B cell (primary cell): ENCODE measurements at regions of chr17 and their contacts with region 1.

Region 1: GRCh38 chr17:2786176-2786881 is 9.9 kb upstream of the RAP1GAP2 start:
- DNase-seq: peak; percentile 95
- ATAC-seq: peak; percentile 99
- H3K4me3 ChIP-seq: no peak overlapping the region
- H3K4me3 Mint-ChIP-seq: peak overlapping the region; percentile 44
- H3K27ac ChIP-seq: no peak overlapping the region
- H3K27ac Mint-ChIP-seq: peak overlapping the region; percentile 41
- H3K4me1 ChIP-seq: peaks cover 18 to 29% of the 10 kb centered on the region in 2 donors
- H3K4me1 Mint-ChIP-seq: peaks cover 19% of the 10 kb centered on the region
- H3K27me3 ChIP-seq: peaks cover 0 to 15% (median 4%) of the 10 kb centered on the region in 4 experiments
- H3K27me3 Mint-ChIP-seq: no peaks in the 10 kb centered on the region
- CTCF ChIP-seq: peak; percentile 89

Region 2: DNA sequence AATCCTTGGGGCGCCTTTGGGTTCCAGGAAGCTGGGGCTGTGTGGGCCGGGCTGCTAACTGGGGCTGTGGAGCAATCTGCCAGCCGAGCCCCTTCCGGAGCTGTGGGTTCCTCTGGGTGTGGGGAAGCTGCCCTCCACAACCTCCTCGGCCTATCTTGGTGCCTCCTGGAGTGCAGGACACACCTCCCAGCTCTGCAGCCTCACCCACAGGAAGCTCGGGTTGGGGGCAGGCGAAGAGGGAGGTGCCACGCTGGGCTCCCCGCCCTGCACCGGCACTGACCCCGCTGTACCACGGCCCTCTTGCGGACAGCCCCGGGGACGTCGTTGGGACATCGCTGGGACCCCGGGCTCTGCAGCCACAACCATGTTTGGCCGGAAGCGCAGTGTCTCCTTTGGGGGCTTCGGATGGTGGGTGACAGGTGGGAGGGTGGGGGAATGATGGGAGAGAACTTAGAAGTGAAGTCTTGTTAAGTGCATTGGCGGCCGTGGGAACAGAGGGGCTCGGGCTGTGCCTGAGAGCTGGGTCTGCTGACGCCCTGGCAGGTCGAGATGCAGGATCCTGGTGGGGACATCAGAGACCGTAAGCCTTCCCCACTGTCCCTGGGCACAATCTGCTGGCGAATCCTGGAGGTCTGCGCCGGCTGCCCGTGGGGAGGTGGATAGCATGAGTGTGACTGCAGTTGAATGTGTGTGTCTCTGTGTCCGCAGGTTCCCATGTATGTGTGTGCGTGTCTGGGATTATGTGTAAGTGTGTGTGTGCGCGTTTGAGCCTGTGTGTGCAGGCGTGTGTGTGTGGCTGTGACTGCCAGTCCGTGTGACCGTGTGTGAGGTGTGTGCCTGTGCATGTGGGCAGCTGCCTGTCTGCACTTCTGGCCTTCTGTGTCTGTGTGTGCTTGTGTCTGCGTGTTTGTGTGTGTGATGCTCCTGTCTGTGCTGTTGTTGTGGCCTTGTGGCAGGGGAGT is 10.1 kb after region 1 on chr17 and contains the start of gene RAP1GAP2:
- CTCF ChIA-PET with region 1: interaction called, 13 read pairs
- POLR2A ChIA-PET with region 1: interaction called, 3 read pairs
- intact Hi-C with region 1: loop called (anchors 1 kb)
- DNase-seq: peak; percentile 65
- ATAC-seq: peak; percentile 78
- H3K4me3 ChIP-seq: peak within 1 kb of the TSS; percentile 43 to 78 (median 62)
- H3K4me3 Mint-ChIP-seq: peak within 1 kb of the TSS; percentile 96
- H3K27ac ChIP-seq: peak within 1 kb of the TSS; percentile 7 to 33
- H3K27ac Mint-ChIP-seq: peak within 1 kb of the TSS; percentile 91
- H3K4me1 ChIP-seq: peaks cover 56 to 75% of the 10 kb centered on the region in 2 donors
- H3K4me1 Mint-ChIP-seq: peaks cover 71% of the 10 kb centered on the region
- H3K27me3 ChIP-seq: no peaks in the 10 kb centered on the region
- H3K27me3 Mint-ChIP-seq: no peaks in the 10 kb centered on the region
- CTCF ChIP-seq: no peak
- total RNA-seq, gene RAP1GAP2: 13.4 and 14.9 TPM in 2 replicates

Region 3: DNA sequence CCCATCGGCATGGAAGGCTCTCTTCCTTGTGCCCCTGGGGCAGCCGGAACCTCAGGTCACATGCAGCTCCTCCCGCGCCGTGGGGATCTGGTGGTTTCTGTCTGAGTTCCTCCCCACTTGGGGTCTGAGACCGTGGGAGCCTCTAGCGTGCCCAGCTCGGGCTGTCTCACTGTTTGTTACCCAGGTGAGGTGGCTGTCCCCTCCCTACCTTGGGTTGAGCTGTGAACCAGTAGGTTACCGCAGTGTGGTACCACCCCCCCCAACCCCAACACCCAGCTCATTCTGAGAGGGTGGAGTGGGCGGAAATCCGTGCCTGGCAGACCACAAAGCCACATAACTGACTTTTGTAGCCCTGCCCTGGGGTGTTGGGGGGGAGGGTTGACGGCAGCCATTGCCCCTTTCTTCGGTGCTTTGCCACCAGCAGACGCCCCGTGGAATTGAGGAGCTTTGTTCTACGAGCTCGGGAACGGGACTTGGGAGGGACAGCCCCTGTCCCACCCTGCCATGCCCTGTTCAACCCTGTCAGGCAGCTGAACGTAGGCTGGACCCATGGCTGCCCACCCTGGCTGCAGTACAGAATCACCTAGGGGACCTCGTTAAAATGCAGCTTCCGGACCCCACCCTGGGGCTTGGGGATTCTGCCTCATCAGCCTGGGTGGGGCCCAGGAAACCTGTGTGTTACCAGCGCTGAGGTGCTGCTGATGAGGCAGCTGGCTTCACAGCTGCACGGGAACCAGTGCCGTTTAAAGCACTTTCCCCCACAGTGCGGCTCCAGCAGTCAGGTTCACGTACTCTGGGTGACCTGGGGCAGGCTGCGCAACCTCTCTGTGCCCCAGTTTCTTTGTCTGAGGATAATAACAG is 28.4 kb after region 1 on chr17:
- CTCF ChIA-PET with region 1: interaction called, 32 read pairs
- POLR2A ChIA-PET with region 1: interaction called, 17 read pairs
- intact Hi-C with region 1: loop called (anchors 1 kb)
- DNase-seq: peak; percentile 95
- ATAC-seq: peak; percentile 82
- H3K4me3 ChIP-seq: peak overlapping the region in 4 of 5 experiments; percentile 39 to 70 (median 57)
- H3K4me3 Mint-ChIP-seq: peak overlapping the region; percentile 75
- H3K27ac ChIP-seq: peak overlapping the region; percentile 69 to 79
- H3K27ac Mint-ChIP-seq: peak overlapping the region; percentile 93
- H3K4me1 ChIP-seq: peaks cover 24 to 55% of the 10 kb centered on the region in 2 donors
- H3K4me1 Mint-ChIP-seq: peaks cover 44% of the 10 kb centered on the region
- H3K27me3 ChIP-seq: no peaks in the 10 kb centered on the region
- H3K27me3 Mint-ChIP-seq: no peaks in the 10 kb centered on the region
- CTCF ChIP-seq: no peak

Region 4: GRCh38 chr17:2929881-2930533 is 143.7 kb after region 1 on chr17:
- CTCF ChIA-PET with region 1: interaction called, 16 read pairs
- POLR2A ChIA-PET with region 1: no interaction called
- intact Hi-C with region 1: loop called (anchors 2 kb)
- DNase-seq: peak; percentile 47
- ATAC-seq: peak; percentile 34
- H3K4me3 ChIP-seq: no peak overlapping the region
- H3K4me3 Mint-ChIP-seq: no peak overlapping the region
- H3K27ac ChIP-seq: no peak overlapping the region
- H3K27ac Mint-ChIP-seq: no peak overlapping the region
- H3K4me1 ChIP-seq: peaks cover 24 to 28% of the 10 kb centered on the region in 2 donors
- H3K4me1 Mint-ChIP-seq: peaks cover 28% of the 10 kb centered on the region
- H3K27me3 ChIP-seq: peaks cover 0 to 4% (median 1%) of the 10 kb centered on the region in 4 experiments
- H3K27me3 Mint-ChIP-seq: peaks cover 5% of the 10 kb centered on the region
- CTCF ChIP-seq: peak; percentile 75